ENCODE measurements at regions of chr11 and their contacts with region 1.

Region 1: DNA sequence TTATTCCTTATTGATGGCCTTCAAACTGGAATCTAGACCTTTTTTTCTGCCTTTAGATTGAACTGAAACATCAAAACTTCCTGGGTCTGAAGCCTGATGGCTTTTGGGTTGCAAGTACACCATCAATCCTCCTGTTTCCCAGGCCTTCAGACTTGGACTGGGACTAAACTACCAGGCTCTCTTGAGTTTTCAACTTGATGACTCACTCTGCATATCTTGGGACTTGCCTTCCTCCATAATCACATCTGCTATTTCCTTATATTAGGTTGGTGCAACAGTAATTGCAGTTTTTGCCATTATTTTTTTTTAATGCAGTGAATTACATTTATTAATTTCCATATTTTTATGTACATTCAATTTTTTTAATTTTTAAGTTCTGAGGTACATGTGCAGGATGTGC is 7.0 kb downstream of the OR51B5 start:
- DNase-seq: no peak
- H3K4me3 ChIP-seq: no peak overlapping the region
- H3K27ac ChIP-seq: no peak overlapping the region
- H3K27me3 ChIP-seq: no peaks in the 10 kb centered on the region
- CTCF ChIP-seq: no peak

Region 2: DNA sequence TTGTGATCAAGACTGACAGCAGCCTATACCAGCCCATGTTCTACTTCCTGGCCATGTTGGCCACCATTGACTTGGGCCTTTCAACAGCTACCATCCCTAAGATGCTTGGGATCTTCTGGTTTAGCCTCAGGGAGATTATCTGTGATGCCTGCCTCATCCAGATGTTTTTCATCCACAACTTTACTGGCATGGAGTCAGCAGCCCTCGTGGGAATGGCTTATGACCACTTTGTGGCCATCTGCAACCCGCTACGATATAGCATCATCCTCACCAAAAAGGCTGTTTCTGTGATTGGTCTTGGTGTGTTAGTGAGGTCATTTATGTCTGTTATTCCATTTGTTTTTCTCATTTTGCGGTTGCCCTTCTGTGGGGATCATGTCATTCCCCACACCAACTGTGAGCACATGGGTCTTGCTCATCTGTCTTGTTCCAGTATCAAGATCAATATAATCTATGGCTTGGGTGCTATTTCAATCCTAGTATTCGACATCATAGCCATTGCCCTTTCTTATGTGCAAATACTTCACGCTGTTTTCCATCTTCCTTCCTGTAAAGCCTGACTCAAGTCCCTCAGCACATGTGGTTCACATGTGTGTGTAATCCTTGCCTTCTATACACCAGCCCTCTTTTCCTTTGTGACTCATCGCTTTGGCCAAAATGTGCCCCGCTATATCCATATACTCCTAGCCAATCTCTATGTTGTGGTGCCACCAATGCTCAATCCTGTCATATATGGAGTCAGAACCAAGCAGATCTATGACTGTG is 243.3 kb before region 1 on chr11:
- CTCF ChIA-PET with region 1: no interaction called
- POLR2A ChIA-PET with region 1: interaction called, 11 read pairs
- DNase-seq: no peak
- H3K4me3 ChIP-seq: no peak overlapping the region
- H3K27ac ChIP-seq: no peak overlapping the region
- H3K27me3 ChIP-seq: no peaks in the 10 kb centered on the region
- CTCF ChIP-seq: no peak